CD4-positive, alpha-beta memory T cell (primary cell): ENCODE measurements at regions of chr19 and their contacts with region 1.

Region 1: GRCh38 chr19:796692-797527 is at the start of gene PTBP1:
- DNase-seq: peak; percentile 99 to 100 (median 100)
- H3K4me3 ChIP-seq: peak within 1 kb of the TSS; percentile 66 to 74
- H3K4me3 Mint-ChIP-seq: peak within 1 kb of the TSS; percentile 92 to 96 (median 94)
- H3K27ac ChIP-seq: peak within 1 kb of the TSS; percentile 67
- H3K27ac Mint-ChIP-seq: peak within 1 kb of the TSS; percentile 90 to 96 (median 93)
- H3K4me1 ChIP-seq: peaks cover 39% of the 10 kb centered on the region
- H3K4me1 Mint-ChIP-seq: peaks cover 16 to 40% (median 27%) of the 10 kb centered on the region in 4 donors
- H3K27me3 ChIP-seq: no peaks in the 10 kb centered on the region
- H3K27me3 Mint-ChIP-seq: no peaks in the 10 kb centered on the region
- total RNA-seq, gene PTBP1: 315 TPM

Region 2: GRCh38 chr19:633068-633785 is 163.7 kb before region 1 on chr19 and contains the start of gene POLRMT:
- CTCF ChIA-PET with region 1: no interaction called
- POLR2A ChIA-PET with region 1: no interaction called
- intact Hi-C with region 1: loop called (anchors 1 kb)
- DNase-seq: peak; percentile 94 to 96 (median 96)
- H3K4me3 ChIP-seq: peak within 1 kb of the TSS; percentile 61 to 86
- H3K4me3 Mint-ChIP-seq: peak within 1 kb of the TSS; percentile 90 to 98 (median 96)
- H3K27ac ChIP-seq: peak within 1 kb of the TSS; percentile 71
- H3K27ac Mint-ChIP-seq: peak within 1 kb of the TSS; percentile 94 to 98 (median 97)
- H3K4me1 ChIP-seq: peaks cover 22% of the 10 kb centered on the region
- H3K4me1 Mint-ChIP-seq: peaks cover 2 to 49% (median 24%) of the 10 kb centered on the region in 4 donors
- H3K27me3 ChIP-seq: no peaks in the 10 kb centered on the region
- H3K27me3 Mint-ChIP-seq: no peaks in the 10 kb centered on the region
- total RNA-seq, gene POLRMT: 98.9 to 103 TPM

Region 3: DNA sequence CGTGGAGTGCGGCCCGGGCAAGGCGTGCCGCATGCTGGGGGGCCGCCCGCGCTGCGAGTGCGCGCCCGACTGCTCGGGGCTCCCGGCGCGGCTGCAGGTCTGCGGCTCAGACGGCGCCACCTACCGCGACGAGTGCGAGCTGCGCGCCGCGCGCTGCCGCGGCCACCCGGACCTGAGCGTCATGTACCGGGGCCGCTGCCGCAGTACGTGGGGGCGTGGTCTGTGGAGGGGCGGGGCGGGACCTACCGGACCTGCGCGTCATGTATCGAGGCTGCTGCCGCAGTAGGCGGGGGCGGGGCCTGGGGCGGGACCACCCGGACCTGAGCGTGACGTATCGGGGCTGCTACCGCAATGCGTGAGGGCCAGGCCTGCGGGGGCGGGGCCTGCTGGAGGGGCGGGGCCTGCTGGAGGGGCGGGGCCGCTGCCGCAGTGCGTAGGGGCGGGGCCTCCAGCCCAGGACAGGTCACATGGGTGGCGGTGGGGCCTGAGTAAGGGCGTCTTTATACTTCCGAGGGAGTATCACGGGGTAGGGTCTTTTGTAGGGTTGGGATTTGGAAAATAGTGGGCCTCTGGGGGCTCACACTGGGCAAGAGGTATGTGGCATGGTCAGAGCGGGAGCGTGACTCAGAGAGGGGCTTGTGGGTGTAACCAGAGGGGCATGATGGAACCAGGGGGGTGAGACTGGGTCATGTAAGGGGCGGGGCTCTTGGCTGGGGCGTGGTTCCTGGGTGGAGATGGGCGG is 116.5 kb before region 1 on chr19:
- CTCF ChIA-PET with region 1: no interaction called
- POLR2A ChIA-PET with region 1: no interaction called
- intact Hi-C with region 1: loop called (anchors 1 kb)
- DNase-seq: peak; percentile 96 to 100 (median 98)
- H3K4me3 ChIP-seq: peak overlapping the region; percentile 34 to 76
- H3K4me3 Mint-ChIP-seq: peak overlapping the region; percentile 89 to 98 (median 94)
- H3K27ac ChIP-seq: peak overlapping the region; percentile 58
- H3K27ac Mint-ChIP-seq: peak overlapping the region; percentile 78 to 100 (median 99)
- H3K4me1 ChIP-seq: peaks cover 13% of the 10 kb centered on the region
- H3K4me1 Mint-ChIP-seq: peaks cover 0 to 6% (median 1%) of the 10 kb centered on the region in 4 donors
- H3K27me3 ChIP-seq: peaks cover 5% of the 10 kb centered on the region
- H3K27me3 Mint-ChIP-seq: peaks cover 3 to 7% of the 10 kb centered on the region in 2 donors

Region 4: GRCh38 chr19:827783-828321 is 30.9 kb after region 1 on chr19 and contains the start of gene AZU1:
- CTCF ChIA-PET with region 1: no interaction called
- POLR2A ChIA-PET with region 1: no interaction called
- intact Hi-C with region 1: no loop called
- DNase-seq: no peak
- H3K4me3 ChIP-seq: no peak within 1 kb of the TSS
- H3K4me3 Mint-ChIP-seq: no peak within 1 kb of the TSS
- H3K27ac ChIP-seq: no peak within 1 kb of the TSS
- H3K27ac Mint-ChIP-seq: no peak within 1 kb of the TSS
- H3K4me1 ChIP-seq: no peaks in the 10 kb centered on the region
- H3K4me1 Mint-ChIP-seq: no peaks in the 10 kb centered on the region
- H3K27me3 ChIP-seq: no peaks in the 10 kb centered on the region
- H3K27me3 Mint-ChIP-seq: peaks cover 4% of the 10 kb centered on the region in 2 donors
- total RNA-seq, gene AZU1: not detected

Region 5: GRCh38 chr19:913080-913748 is 116.3 kb after region 1 on chr19 and contains the start of gene R3HDM4:
- CTCF ChIA-PET with region 1: no interaction called
- POLR2A ChIA-PET with region 1: interaction called, 3 read pairs
- intact Hi-C with region 1: loop called (anchors 1 kb)
- DNase-seq: peak; percentile 82 to 85 (median 85)
- H3K4me3 ChIP-seq: peak within 1 kb of the TSS; percentile 58 to 69
- H3K4me3 Mint-ChIP-seq: peak within 1 kb of the TSS; percentile 82 to 90 (median 86)
- H3K27ac ChIP-seq: peak within 1 kb of the TSS; percentile 94
- H3K27ac Mint-ChIP-seq: peak within 1 kb of the TSS; percentile 88 to 95 (median 93)
- H3K4me1 ChIP-seq: peaks cover 57% of the 10 kb centered on the region
- H3K4me1 Mint-ChIP-seq: peaks cover 13 to 42% (median 28%) of the 10 kb centered on the region in 4 donors
- H3K27me3 ChIP-seq: no peaks in the 10 kb centered on the region
- H3K27me3 Mint-ChIP-seq: peaks cover 0 to 4% of the 10 kb centered on the region in 2 donors
- total RNA-seq, gene R3HDM4: 153 to 160 TPM

Region 6: GRCh38 chr19:1249298-1249989 is 452.5 kb after region 1 on chr19:
- CTCF ChIA-PET with region 1: no interaction called
- POLR2A ChIA-PET with region 1: interaction called, 3 read pairs
- intact Hi-C with region 1: loop called (anchors 10 kb)
- DNase-seq: peak; percentile 92 to 97 (median 95)
- H3K4me3 ChIP-seq: peak overlapping the region in 1 of 2 donors; percentile 77
- H3K4me3 Mint-ChIP-seq: peak overlapping the region; percentile 83 to 94 (median 90)
- H3K27ac ChIP-seq: peak overlapping the region; percentile 92
- H3K27ac Mint-ChIP-seq: peak overlapping the region; percentile 89 to 94 (median 91)
- H3K4me1 ChIP-seq: peaks cover 33% of the 10 kb centered on the region
- H3K4me1 Mint-ChIP-seq: peaks cover 2 to 26% (median 9%) of the 10 kb centered on the region in 4 donors
- H3K27me3 ChIP-seq: no peaks in the 10 kb centered on the region
- H3K27me3 Mint-ChIP-seq: no peaks in the 10 kb centered on the region

Region 7: GRCh38 chr19:1863726-1864480 is 1067.0 kb after region 1 on chr19:
- CTCF ChIA-PET with region 1: no interaction called
- POLR2A ChIA-PET with region 1: no interaction called
- intact Hi-C with region 1: loop called (anchors 5 kb)
- DNase-seq: peak; percentile 92 to 94 (median 94)
- H3K4me3 ChIP-seq: peak overlapping the region; percentile 23 to 76
- H3K4me3 Mint-ChIP-seq: peak overlapping the region; percentile 58 to 83 (median 74)
- H3K27ac ChIP-seq: peak overlapping the region; percentile 74
- H3K27ac Mint-ChIP-seq: peak overlapping the region in 5 of 7 donors; percentile 52 to 91 (median 88)
- H3K4me1 ChIP-seq: peaks cover 38% of the 10 kb centered on the region
- H3K4me1 Mint-ChIP-seq: peaks cover 8 to 41% (median 25%) of the 10 kb centered on the region in 4 donors
- H3K27me3 ChIP-seq: no peaks in the 10 kb centered on the region
- H3K27me3 Mint-ChIP-seq: no peaks in the 10 kb centered on the region